Tibial artery (tissue), 4 donors: ENCODE measurements at regions of chr19 and their contacts with region 1.

Region 1: DNA sequence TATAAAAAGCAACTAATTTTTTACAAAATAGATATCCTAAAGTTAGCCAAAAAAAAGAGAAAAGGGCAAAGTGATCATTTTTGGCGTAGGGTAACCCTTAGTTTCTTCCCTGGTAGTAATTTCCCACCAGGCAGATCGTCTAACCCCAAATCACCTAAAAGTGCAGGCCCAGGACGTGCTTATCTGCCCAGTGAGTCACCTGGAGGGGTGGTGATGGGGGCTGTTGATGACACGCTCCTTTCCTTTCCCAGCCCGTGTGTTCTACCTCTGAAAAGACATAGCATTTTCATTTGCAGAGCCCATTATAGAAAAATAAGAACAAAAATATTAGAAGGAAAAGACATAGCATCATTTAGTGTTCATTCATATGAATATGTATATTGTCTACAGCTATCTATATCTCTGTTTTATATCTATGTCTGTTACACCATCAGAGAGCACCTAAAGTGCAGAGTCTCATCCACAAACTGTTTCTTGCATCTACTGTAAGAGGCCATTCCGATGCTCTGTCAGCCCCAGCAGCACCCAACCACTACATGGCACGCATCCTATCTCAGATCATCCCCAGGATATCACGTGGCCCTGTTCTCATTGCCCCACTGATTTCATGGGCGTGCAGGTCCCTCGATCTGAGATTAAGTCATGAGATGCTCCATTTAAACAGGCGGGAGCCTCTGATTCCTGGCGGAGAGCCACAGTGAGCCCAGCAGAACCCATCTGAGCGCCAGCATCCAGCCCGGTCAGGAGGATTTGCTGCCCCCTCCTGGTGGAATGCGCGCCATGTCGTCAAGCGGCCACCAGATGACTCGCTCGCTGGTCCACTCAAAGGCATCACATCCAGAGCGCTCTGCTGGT is 8.5 kb upstream of the LILRB3 start:
- DNase-seq: peak; percentile 78 to 86
- H3K4me3 ChIP-seq: no peak overlapping the region
- H3K27ac ChIP-seq: no peak overlapping the region
- H3K4me1 ChIP-seq: no peaks in the 10 kb centered on the region
- H3K27me3 ChIP-seq: peaks cover 0 to 22% of the 10 kb centered on the region in 2 donors
- CTCF ChIP-seq: peak; percentile 80 to 84

Region 2: DNA sequence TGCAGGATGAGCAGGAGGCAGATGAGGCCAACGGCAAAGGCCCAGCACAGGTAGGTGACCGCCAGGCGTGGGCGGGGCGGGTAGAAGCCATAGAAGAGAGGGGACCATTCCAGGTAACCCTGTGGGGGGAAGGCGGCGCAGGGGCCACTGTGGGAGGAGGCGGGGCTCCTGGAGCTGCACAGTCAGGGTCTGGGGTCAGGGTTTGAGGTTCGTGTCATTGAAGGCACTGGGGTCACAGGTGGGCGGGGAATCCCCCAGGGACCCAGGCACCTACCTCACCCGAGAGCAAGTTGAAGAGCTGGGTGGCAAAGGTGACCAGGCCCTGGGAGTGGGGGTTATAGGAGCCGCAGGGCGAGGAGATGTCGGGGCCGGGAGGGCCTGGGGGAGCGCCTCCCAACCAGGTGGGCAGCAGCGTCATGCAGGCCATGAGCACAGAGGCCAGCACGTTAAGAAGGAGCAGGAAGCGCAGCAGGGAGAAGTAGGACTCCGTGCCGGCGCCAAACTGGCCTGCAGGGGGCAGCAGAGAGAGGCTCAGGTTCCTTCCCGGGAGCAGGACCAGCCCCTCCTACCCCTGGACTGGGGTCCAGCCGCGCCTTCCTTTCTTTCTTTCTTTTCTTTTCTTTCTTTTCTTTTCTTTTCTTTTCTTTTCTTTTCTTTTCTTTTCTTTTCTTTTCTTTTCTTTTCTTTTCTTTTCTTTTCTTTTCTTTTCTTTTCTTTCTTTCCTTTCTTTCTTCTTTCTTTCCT is 63.0 kb before region 1 on chr19:
- intact Hi-C with region 1: loop called (anchors 5 kb)
- DNase-seq: peak; percentile 84 to 93
- H3K4me3 ChIP-seq: no peak overlapping the region
- H3K27ac ChIP-seq: no peak overlapping the region
- H3K4me1 ChIP-seq: peaks cover 0 to 22% (median 3%) of the 10 kb centered on the region in 4 donors
- H3K27me3 ChIP-seq: peaks cover 0 to 33% of the 10 kb centered on the region in 2 donors
- CTCF ChIP-seq: peak; percentile 83 to 84

Region 3: DNA sequence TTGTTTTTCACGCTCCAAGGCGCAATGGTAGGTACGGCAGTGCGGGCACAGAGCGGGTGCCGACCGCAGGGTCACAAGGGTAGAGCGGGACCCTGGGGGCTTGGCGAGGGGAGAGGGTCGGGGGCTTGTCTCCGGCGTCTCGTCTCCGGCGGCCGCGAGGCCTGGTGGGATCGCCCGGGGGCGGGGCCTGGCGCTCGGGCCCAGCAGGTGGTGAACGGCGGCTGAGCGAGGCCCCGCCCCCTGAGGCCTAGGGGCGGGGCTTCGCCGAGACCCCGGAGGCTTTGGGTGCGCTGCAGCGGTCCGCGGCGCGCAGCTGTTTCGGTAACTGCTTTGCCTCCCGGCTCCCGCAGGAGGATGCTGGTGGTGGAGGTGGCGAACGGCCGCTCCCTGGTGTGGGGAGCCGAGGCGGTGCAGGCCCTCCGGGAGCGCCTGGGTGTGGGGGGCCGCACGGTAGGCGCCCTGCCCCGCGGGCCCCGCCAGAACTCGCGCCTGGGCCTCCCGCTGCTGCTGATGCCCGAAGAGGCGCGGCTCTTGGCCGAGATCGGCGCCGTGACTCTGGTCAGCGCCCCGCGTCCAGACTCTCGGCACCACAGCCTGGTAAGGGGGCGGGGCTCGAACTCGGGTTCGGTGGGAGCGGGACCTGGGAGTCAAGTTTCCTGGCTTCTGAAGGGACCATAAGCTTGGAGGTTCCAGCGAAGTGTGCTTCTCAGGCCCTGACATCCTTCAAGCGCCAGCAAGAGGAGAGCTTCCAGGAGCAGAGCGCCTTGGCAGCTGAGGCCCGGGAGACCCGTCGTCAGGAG is 40.1 kb before region 1 on chr19 and contains the start of gene TSEN34:
- intact Hi-C with region 1: no loop called
- DNase-seq: peak; percentile 85 to 86
- H3K4me3 ChIP-seq: peak within 1 kb of the TSS; percentile 71 to 82
- H3K27ac ChIP-seq: peak within 1 kb of the TSS; percentile 92 to 97
- H3K4me1 ChIP-seq: peaks cover 4 to 24% (median 19%) of the 10 kb centered on the region in 4 donors
- H3K27me3 ChIP-seq: no peaks in the 10 kb centered on the region
- CTCF ChIP-seq: no peak